ENCODE measurements at regions of chr5 and their contacts with region 1.

Region 1: DNA sequence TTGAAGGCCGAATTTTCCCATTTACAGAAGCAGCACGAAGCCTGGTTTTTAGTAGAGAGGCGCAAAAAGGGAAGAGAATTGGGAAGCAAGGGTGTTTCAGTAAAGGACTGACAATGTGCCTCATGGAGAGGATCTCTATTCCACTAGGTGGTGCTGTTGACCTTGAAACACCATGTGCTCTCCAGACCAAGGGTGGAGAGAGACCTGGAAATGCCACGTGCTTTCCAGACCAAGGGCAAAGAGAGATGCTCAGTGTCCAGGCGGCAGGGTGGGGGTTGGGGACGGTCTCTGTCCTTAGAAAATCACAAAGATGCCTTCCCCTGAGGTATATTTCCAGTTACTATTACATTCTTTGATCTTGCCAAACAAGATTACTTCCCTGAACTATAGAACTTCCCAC is 425.3 kb downstream of the CSNK1G3 start:
- DNase-seq: peak in 3 of 5 donors; percentile 21 to 41 (median 33)
- ATAC-seq: peak in 2 of 4 donors; percentile 44 to 79
- H3K4me3 ChIP-seq: no peak overlapping the region
- H3K27ac ChIP-seq: no peak overlapping the region
- H3K4me1 ChIP-seq: no peaks in the 10 kb centered on the region
- H3K27me3 ChIP-seq: no peaks in the 10 kb centered on the region
- CTCF ChIP-seq: peak; percentile 40 to 73 (median 58)
- POLR2A ChIP-seq: no peak

Region 2: DNA sequence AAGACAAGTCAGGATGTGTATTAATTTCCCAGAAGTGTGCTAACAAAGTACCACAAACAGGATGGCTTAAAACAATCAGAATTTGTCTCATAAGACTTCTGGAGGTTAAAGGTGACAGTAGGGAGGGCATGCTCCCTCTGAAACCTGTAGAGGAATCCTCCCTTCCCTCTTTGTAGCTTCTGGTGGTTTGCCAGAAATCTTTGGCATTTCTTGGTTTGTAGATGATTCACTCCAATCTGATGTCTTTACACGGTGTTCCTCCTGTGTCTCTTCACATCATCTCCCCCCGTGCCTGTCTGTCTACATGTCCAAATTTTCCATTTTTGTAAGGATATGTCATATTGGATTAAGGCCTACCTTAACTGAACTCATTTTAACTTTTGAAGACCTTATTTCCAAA is 337.7 kb after region 1 on chr5:
- intact Hi-C with region 1: no loop called
- DNase-seq: no peak
- ATAC-seq: no peak
- H3K4me3 ChIP-seq: no peak overlapping the region
- H3K27ac ChIP-seq: no peak overlapping the region
- H3K4me1 ChIP-seq: peaks cover 0 to 10% (median 0%) of the 10 kb centered on the region in 12 donors
- H3K27me3 ChIP-seq: no peaks in the 10 kb centered on the region
- CTCF ChIP-seq: no peak
- POLR2A ChIP-seq: no peak

Region 3: DNA sequence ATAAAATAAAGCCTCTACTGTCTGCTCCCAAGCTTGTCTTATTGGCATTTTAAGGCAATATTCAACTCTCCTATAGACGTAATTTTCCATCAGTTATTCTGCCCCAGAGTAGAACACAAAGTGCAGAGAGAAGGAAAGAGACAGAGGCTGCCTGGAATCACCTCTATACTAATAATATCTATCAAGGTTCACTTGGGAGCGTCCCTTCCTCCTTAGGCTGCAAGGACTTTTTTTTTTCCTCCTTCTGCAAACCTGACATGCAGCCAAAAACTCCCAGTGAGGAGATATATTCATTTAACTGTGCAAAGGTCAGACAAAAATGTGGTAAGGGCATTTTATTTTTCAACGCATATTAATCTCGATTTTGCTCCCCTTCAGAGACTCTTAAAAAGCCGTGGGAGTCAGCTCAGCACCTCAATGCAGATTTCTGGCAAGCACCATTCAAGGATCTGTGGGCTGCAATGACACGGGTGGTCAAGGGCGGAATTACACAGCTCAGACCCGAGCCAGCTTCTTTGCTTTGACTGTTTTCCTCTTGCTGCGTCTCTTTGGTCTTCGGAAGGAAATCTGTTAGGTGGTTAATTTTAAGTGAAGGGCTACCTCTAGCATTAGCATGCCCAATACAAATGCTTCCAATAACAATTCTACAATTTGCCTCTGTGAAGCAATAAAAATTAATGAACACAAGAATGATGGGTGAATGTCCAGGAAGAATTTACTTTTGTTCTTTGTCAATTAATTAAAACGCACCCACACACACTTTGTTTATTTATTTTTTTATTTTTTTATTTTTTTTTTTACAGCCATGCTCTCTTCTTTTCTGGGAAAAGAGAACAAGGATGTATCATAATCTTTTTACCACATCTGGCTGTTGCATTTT is 1898.3 kb after region 1 on chr5:
- intact Hi-C with region 1: loop called in 1 of 10 experiments (anchors 10 kb)
- DNase-seq: peak in 4 of 5 donors; percentile 16 to 38 (median 30)
- ATAC-seq: peak in 3 of 4 donors; percentile 74 to 86 (median 77)
- H3K4me3 ChIP-seq: peak overlapping the region in 4 of 12 donors; percentile 10 to 20 (median 16)
- H3K27ac ChIP-seq: no peak overlapping the region
- H3K4me1 ChIP-seq: peaks cover 0 to 8% (median 4%) of the 10 kb centered on the region in 12 donors
- H3K27me3 ChIP-seq: no peaks in the 10 kb centered on the region
- CTCF ChIP-seq: peak; percentile 42 to 84 (median 70)
- POLR2A ChIP-seq: no peak

Measured in heart left ventricle (tissue), 16 donors.